ENCODE measurements at regions of chr18 and their contacts with region 1.

Region 1: GRCh38 chr18:48777026-48777743 is 173.6 kb downstream of the SMAD7 start:
- DNase-seq: peak; percentile 63
- ATAC-seq: peak; percentile 85
- H3K4me3 Mint-ChIP-seq: no peak overlapping the region
- H3K27ac Mint-ChIP-seq: no peak overlapping the region
- H3K4me1 Mint-ChIP-seq: peaks cover 18% of the 10 kb centered on the region
- H3K27me3 Mint-ChIP-seq: no peaks in the 10 kb centered on the region
- CTCF ChIP-seq: peak; percentile 66

Region 2: DNA sequence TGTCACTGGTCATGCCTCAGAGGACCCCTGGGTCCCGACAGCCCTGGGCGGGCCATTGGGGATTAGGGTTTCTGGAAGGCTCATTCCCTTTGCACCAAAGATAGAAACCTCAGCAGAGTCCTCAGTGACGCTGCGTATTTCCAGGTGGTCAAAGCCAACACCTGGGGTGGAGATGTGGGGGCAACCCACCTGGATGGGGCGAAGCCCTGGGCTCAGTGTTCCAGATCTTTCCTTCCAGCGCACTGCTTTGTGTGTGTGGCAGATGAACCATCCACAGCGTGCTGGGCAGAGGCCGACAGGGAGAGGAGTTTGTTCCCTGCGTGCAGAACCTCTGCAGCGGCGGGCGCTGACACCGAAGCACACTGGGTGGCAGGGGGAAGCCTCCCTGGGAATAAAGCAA is 94.4 kb before region 1 on chr18:
- CTCF ChIA-PET with region 1: no interaction called
- POLR2A ChIA-PET with region 1: no interaction called
- intact Hi-C with region 1: no loop called
- DNase-seq: no peak
- ATAC-seq: no peak
- H3K4me3 Mint-ChIP-seq: no peak overlapping the region
- H3K27ac Mint-ChIP-seq: no peak overlapping the region
- H3K4me1 Mint-ChIP-seq: no peaks in the 10 kb centered on the region
- H3K27me3 Mint-ChIP-seq: no peaks in the 10 kb centered on the region
- CTCF ChIP-seq: no peak

Region 3: DNA sequence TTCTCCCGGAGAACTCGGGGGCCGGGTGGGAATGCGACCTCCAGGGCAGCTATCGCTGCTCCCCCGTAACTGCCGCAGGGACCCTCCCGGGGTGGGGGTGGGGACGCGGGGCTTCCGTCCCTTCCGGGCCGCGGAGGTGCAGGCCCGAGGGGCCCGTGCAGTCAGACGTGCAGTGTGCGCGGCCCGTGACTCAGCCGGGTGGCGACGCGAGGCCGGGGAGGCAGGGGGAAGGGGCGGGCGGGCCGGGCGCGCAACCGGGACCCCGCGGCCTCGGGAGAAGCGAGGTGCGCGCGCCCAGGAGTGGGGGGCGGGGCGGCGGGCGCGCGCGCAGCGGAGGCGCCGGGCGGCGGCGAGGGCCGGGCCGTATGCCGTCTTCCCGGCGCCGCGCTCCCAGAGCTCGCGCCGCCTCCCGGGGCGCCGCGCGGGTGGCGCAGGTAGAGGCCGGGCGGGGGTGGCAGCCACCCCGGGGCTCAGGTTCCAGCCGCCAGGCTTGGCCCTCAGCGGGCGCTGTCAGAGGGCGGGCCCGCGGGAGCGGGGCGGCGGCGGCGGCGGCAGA is 198.5 kb after region 1 on chr18:
- CTCF ChIA-PET with region 1: no interaction called
- POLR2A ChIA-PET with region 1: no interaction called
- intact Hi-C with region 1: loop called (anchors 1 kb)
- DNase-seq: peak; percentile 44
- ATAC-seq: peak; percentile 78
- H3K4me3 Mint-ChIP-seq: peak overlapping the region; percentile 38
- H3K27ac Mint-ChIP-seq: no peak overlapping the region
- H3K4me1 Mint-ChIP-seq: peaks cover 14% of the 10 kb centered on the region
- H3K27me3 Mint-ChIP-seq: peaks cover 16% of the 10 kb centered on the region
- CTCF ChIP-seq: no peak

Region 4: DNA sequence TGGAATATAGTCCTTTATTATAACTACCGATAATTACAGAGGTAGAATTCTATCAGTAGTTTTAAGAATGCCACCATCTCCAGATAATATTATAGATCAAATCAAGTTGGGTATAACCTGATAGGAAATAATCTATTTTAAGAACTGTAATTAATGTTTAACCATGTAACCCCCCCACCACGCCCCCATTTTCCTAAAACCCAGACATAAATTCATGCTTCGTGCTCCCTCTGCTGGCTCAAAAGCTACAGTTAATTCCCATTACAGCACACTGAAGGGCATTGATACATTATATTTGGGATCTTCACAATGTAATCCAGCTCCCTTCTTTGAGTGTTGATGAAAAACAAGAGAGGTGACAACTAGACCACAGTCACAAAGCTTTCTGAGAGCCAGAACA is 401.6 kb after region 1 on chr18:
- CTCF ChIA-PET with region 1: interaction called, 15 read pairs
- POLR2A ChIA-PET with region 1: no interaction called
- intact Hi-C with region 1: loop called (anchors 1 kb)
- DNase-seq: no peak
- ATAC-seq: no peak
- H3K4me3 Mint-ChIP-seq: no peak overlapping the region
- H3K27ac Mint-ChIP-seq: no peak overlapping the region
- H3K4me1 Mint-ChIP-seq: peaks cover 30% of the 10 kb centered on the region
- H3K27me3 Mint-ChIP-seq: no peaks in the 10 kb centered on the region
- CTCF ChIP-seq: no peak

Region 5: DNA sequence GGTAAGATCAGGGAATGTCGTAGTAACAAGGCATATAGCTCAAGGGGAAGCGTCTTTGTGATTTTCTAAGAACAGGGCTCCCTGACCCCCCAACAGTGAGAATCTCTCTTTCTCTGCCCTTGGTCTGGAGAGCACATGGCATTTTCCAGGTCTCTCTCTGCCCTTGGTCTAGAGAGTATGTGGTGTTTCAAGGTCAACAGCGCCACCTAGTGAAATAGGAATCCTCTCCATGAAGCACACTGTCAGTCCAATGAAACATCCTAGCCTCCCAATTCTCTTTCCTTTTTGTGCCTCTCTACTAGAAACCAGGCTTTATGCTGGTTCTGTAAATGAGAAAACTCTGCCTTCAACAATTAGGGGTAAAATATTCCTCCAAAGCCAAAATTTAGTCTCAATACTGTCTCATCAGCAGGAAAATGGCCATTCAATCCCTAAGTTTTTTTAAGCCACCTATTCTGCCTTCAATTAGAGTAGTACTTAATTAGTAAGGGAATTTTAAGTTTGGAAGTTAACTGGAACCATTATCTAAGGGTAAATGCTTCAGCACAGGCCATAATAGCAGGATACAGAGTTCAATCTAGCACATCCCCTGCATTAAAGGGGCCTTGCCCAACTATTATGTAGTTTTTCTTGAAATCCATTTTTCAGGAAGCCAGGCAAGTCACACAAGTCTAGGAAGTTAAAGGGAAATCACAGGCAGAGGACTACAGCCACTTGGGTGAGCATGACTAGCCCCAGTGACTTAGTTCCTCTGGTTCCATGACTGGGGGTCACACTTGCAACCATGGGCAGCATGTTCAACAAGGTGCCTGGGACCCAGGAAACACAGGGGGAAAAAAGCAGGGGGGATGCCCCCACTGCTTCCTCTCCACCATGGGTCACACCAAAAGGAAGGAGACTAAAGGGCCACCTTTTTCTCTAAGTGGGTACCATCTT is 670.9 kb after region 1 on chr18:
- CTCF ChIA-PET with region 1: no interaction called
- POLR2A ChIA-PET with region 1: no interaction called
- intact Hi-C with region 1: loop called (anchors 10 kb)
- DNase-seq: no peak
- ATAC-seq: no peak
- H3K4me3 Mint-ChIP-seq: no peak overlapping the region
- H3K27ac Mint-ChIP-seq: no peak overlapping the region
- H3K4me1 Mint-ChIP-seq: peaks cover 6% of the 10 kb centered on the region
- H3K27me3 Mint-ChIP-seq: no peaks in the 10 kb centered on the region
- CTCF ChIP-seq: no peak